ENCODE measurements at regions of chr7 and their contacts with region 1.

Region 1: DNA sequence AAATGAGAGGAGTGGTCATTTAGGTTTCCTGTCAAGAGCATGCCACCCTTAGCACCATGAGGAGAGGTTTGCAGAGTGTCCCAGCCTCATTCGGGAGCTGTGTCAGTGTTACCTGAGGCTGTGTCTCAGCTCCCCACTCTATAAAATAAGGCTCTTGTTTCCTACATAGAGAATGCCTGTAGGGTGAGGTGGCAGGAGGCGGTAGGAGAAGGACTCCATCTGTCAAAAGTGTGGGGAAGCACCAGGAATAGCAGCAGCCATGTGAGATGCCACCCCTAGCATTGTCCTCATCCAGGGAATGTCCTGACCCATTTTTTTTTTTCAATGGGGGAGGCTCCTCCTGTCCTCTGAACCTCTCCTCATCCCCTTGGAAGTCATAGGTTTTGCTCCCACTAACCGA is 451.2 kb downstream of the PLXNA4 start:
- DNase-seq: peak in 1 of 2 experiments; percentile 40
- H3K4me3 ChIP-seq: no peak overlapping the region
- H3K27ac ChIP-seq: no peak overlapping the region
- H3K4me1 ChIP-seq: 0 out of 2 replicates have a peak, but pooled peaks cover 7% of the 10 kb centered on the region
- H3K27me3 ChIP-seq: no peaks in the 10 kb centered on the region
- CTCF ChIP-seq: no peak

Region 2: GRCh38 chr7:131745390-131746248 is 379.5 kb before region 1 on chr7:
- CTCF ChIA-PET with region 1: no interaction called
- POLR2A ChIA-PET with region 1: no interaction called
- intact Hi-C with region 1: no loop called
- DNase-seq: peak in 1 of 2 experiments; percentile 27
- H3K4me3 ChIP-seq: no peak overlapping the region
- H3K27ac ChIP-seq: no peak overlapping the region
- H3K4me1 ChIP-seq: no peaks in the 10 kb centered on the region
- H3K27me3 ChIP-seq: peaks cover 10% of the 10 kb centered on the region; the same call in 1 of the 2 replicates
- CTCF ChIP-seq: no peak

Region 3: GRCh38 chr7:132035600-132036362 is 89.3 kb before region 1 on chr7:
- CTCF ChIA-PET with region 1: no interaction called
- POLR2A ChIA-PET with region 1: no interaction called
- intact Hi-C with region 1: no loop called
- DNase-seq: peak in 1 of 2 experiments; percentile 12
- H3K4me3 ChIP-seq: no peak overlapping the region
- H3K27ac ChIP-seq: no peak overlapping the region
- H3K4me1 ChIP-seq: peaks cover 5% of the 10 kb centered on the region
- H3K27me3 ChIP-seq: no peaks in the 10 kb centered on the region
- CTCF ChIP-seq: no peak

Region 4: GRCh38 chr7:132065193-132065988 is 59.7 kb before region 1 on chr7:
- CTCF ChIA-PET with region 1: no interaction called
- POLR2A ChIA-PET with region 1: no interaction called
- intact Hi-C with region 1: no loop called
- DNase-seq: peak; percentile 82 to 85
- H3K4me3 ChIP-seq: no peak overlapping the region
- H3K27ac ChIP-seq: peak overlapping the region; percentile 70
- H3K4me1 ChIP-seq: peaks cover 23% of the 10 kb centered on the region
- H3K27me3 ChIP-seq: no peaks in the 10 kb centered on the region
- CTCF ChIP-seq: no peak

Region 5: GRCh38 chr7:132080967-132081668 is 44.0 kb before region 1 on chr7:
- CTCF ChIA-PET with region 1: no interaction called
- POLR2A ChIA-PET with region 1: no interaction called
- intact Hi-C with region 1: no loop called
- DNase-seq: no peak
- H3K4me3 ChIP-seq: no peak overlapping the region
- H3K27ac ChIP-seq: no peak overlapping the region
- H3K4me1 ChIP-seq: no peaks in the 10 kb centered on the region
- H3K27me3 ChIP-seq: no peaks in the 10 kb centered on the region
- CTCF ChIP-seq: no peak

Region 6: DNA sequence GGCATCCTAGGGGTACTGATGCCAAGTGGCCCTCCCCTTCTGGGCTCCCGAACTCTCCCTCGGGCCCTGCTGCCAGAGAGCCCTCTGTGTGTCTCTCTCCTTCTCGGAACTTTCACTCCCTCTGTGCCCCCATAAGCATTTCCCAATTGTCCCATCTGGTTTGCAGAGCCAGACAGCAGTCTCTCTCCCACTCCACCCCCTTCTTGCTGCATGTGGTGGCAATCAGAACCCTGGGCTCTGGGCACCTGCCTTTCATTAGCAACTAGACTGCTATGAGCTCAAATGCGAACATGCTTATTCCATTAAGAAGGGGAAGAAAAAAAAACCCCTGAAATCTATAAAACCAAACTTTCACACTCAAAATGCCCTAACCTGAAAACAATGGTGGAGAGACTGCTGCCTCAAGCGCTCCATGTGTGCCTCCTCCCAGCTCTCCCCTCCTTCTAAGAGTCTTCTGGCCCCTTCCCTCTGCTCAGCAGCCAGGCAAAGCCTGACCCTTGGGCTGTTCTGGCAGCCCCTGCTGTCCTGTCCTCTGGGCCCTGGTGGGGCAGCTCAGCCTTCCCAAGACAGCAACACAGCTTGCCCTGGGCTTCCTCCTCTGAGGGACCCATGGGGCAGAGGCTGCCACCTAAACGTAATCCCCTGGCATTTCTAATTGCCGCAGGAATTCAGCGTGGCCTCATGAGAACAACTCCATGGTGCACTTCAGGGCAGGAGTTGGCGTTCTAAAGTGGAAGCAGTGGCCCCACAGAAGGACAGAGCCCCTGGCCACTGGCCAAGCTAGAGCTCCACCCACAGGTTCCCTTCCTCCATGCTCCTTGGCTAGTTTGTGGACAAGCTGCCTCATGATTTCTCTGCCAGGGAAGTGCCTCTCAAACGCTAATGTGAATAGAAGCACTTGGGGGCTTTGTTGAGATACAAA is 35.8 kb after region 1 on chr7:
- CTCF ChIA-PET with region 1: no interaction called
- POLR2A ChIA-PET with region 1: interaction called, 14 read pairs
- intact Hi-C with region 1: no loop called
- DNase-seq: peak in 1 of 2 experiments; percentile 73
- H3K4me3 ChIP-seq: no peak overlapping the region
- H3K27ac ChIP-seq: no peak overlapping the region
- H3K4me1 ChIP-seq: no peaks in the 10 kb centered on the region
- H3K27me3 ChIP-seq: peaks cover 100% of the 10 kb centered on the region
- CTCF ChIP-seq: no peak